GM12878 (cell line): ENCODE measurements at regions of chr18 and their contacts with region 1.

Region 1: GRCh38 chr18:62249478-62250097 is 62.5 kb downstream of the RELCH start:
- DNase-seq: peak; percentile 35
- ATAC-seq: peak; percentile 86
- H3K4me3 ChIP-seq: no peak overlapping the region
- H3K27ac ChIP-seq: no peak overlapping the region
- H3K4me1 ChIP-seq: no peaks in the 10 kb centered on the region
- H3K27me3 ChIP-seq: no peaks in the 10 kb centered on the region
- CTCF ChIP-seq: peak; percentile 65 to 74 (median 72)
- EP300 ChIP-seq: no peak
- POLR2A ChIP-seq: no peak
- RAD21 ChIP-seq: peak; percentile 88

Region 2: DNA sequence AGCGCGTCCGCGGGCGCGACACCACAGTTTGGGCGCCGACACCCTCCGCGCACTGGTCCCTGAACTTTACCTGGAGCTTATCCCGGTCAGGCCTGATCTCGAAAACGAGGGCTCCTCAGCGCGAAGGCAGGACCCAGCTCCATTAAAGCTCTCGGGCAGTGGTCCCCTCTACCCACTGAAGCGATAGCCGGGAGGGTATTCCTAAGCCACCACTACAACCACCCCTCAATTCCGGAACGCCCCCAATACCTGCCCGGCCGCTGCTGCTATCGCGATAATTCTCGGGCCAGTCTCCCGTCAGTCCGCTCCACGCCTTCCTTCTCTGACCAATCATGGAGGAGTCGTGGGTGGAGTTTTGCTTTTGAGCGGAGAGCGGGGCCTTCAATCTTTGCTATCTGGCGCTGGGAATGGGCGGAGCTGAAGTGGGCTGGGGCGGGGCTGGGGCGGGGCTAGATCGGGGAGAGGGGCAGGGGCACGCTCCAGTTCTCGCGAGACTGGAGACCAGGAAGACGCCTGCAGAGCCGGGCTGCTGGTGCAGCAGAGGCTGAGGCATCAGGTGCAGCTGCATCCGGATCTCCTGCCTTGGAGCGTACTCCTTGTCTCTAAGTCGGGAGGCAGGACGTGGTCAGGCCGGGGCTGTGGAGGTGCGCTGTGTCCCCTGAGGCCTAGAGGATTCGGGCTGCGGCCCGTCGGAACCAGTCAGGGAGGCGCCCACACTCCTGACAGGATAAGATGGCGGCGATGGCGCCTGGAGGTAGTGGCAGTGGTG is 62.6 kb before region 1 on chr18 and contains the starts of genes PIGN and RELCH:
- CTCF ChIA-PET with region 1: interaction called, 268 read pairs
- POLR2A ChIA-PET with region 1: interaction called, 18 read pairs
- RAD21 ChIA-PET with region 1: interaction called, 98 read pairs
- SMC1A ChIA-PET with region 1: interaction called, 102 read pairs
- in situ Hi-C with region 1: loop called (anchors 5 kb)
- intact Hi-C with region 1: loop called (anchors 1 kb)
- DNase-seq: peak; percentile 92
- ATAC-seq: peak; percentile 90
- H3K4me3 ChIP-seq: peak within 1 kb of the TSS; percentile 99
- H3K27ac ChIP-seq: peak within 1 kb of the TSS; percentile 91
- H3K4me1 ChIP-seq: peaks cover 3% of the 10 kb centered on the region
- H3K27me3 ChIP-seq: no peaks in the 10 kb centered on the region
- CTCF ChIP-seq: no peak
- EP300 ChIP-seq: no peak
- POLR2A ChIP-seq: peak; percentile 98
- RAD21 ChIP-seq: no peak
- polyA plus RNA-seq, gene PIGN: 6.9 to 12.3 TPM
- polyA plus RNA-seq, gene RELCH: 3.1 to 3.4 TPM

Region 3: GRCh38 chr18:62214790-62215189 is 34.8 kb before region 1 on chr18:
- CTCF ChIA-PET with region 1: interaction called, 12 read pairs
- POLR2A ChIA-PET with region 1: no interaction called
- RAD21 ChIA-PET with region 1: interaction called, 3 read pairs
- SMC1A ChIA-PET with region 1: interaction called, 3 read pairs
- in situ Hi-C with region 1: no loop called
- intact Hi-C with region 1: no loop called
- DNase-seq: no peak
- ATAC-seq: no peak
- H3K4me3 ChIP-seq: no peak overlapping the region
- H3K27ac ChIP-seq: no peak overlapping the region
- H3K4me1 ChIP-seq: no peaks in the 10 kb centered on the region; the same call in 1 of the 2 replicates
- H3K27me3 ChIP-seq: no peaks in the 10 kb centered on the region
- CTCF ChIP-seq: no peak
- EP300 ChIP-seq: no peak
- POLR2A ChIP-seq: no peak
- RAD21 ChIP-seq: no peak

Region 4: GRCh38 chr18:62239475-62239874 is 10.1 kb before region 1 on chr18:
- CTCF ChIA-PET with region 1: interaction called, 41 read pairs
- POLR2A ChIA-PET with region 1: no interaction called
- RAD21 ChIA-PET with region 1: no interaction called
- SMC1A ChIA-PET with region 1: interaction called, 8 read pairs
- in situ Hi-C with region 1: no loop called
- intact Hi-C with region 1: no loop called
- DNase-seq: no peak
- ATAC-seq: no peak
- H3K4me3 ChIP-seq: no peak overlapping the region
- H3K27ac ChIP-seq: no peak overlapping the region
- H3K4me1 ChIP-seq: no peaks in the 10 kb centered on the region
- H3K27me3 ChIP-seq: no peaks in the 10 kb centered on the region
- CTCF ChIP-seq: no peak
- EP300 ChIP-seq: no peak
- POLR2A ChIP-seq: no peak
- RAD21 ChIP-seq: no peak

Region 5: DNA sequence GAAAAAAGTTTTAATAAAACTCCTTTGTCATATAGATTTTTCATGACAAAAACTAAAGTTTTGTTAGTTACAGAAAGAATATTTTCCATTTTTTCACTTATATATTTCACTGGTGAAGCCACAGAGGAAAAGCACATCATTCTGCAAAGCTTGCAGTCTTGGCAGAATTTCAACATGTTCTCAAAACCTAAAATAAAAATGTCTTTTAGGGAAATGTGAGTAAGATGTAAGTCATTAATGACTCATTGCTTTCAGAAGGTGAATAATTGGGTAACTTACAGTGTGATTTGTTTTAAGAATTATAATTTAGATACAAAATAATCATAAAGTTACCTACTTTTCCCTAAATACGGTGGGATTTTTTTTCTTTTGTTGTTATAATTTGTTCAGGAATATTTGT is 32.1 kb after region 1 on chr18:
- CTCF ChIA-PET with region 1: interaction called, 16 read pairs
- POLR2A ChIA-PET with region 1: interaction called, 5 read pairs
- RAD21 ChIA-PET with region 1: no interaction called
- SMC1A ChIA-PET with region 1: interaction called, 4 read pairs
- in situ Hi-C with region 1: no loop called
- intact Hi-C with region 1: no loop called
- DNase-seq: no peak
- ATAC-seq: peak; percentile 57
- H3K4me3 ChIP-seq: no peak overlapping the region
- H3K27ac ChIP-seq: no peak overlapping the region
- H3K4me1 ChIP-seq: peaks cover 7% of the 10 kb centered on the region
- H3K27me3 ChIP-seq: no peaks in the 10 kb centered on the region
- CTCF ChIP-seq: no peak
- EP300 ChIP-seq: no peak
- POLR2A ChIP-seq: no peak
- RAD21 ChIP-seq: no peak

Region 6: GRCh38 chr18:62437235-62438017 is 187.8 kb after region 1 on chr18:
- CTCF ChIA-PET with region 1: no interaction called
- POLR2A ChIA-PET with region 1: no interaction called
- RAD21 ChIA-PET with region 1: no interaction called
- SMC1A ChIA-PET with region 1: no interaction called
- in situ Hi-C with region 1: no loop called
- intact Hi-C with region 1: no loop called
- DNase-seq: no peak
- ATAC-seq: peak; percentile 56; the same call in 2 of the 3 replicates
- H3K4me3 ChIP-seq: no peak overlapping the region
- H3K27ac ChIP-seq: no peak overlapping the region
- H3K4me1 ChIP-seq: no peaks in the 10 kb centered on the region
- H3K27me3 ChIP-seq: no peaks in the 10 kb centered on the region; a peak in 1 of 4 replicates
- CTCF ChIP-seq: no peak
- EP300 ChIP-seq: no peak
- POLR2A ChIP-seq: no peak
- RAD21 ChIP-seq: no peak